Activated naive CD4-positive, alpha-beta T cell treated with anti-CD3 and anti-CD28 coated beads for 36 hours (primary cell): ENCODE measurements at regions of chr18 and their contacts with region 1.

Region 1: GRCh38 chr18:23452728-23453679 is at the start of gene RIOK3:
- DNase-seq: peak; percentile 94
- H3K4me3 Mint-ChIP-seq: peak within 1 kb of the TSS; percentile 99
- H3K27ac Mint-ChIP-seq: peak within 1 kb of the TSS; percentile 91
- H3K4me1 Mint-ChIP-seq: peaks cover 42% of the 10 kb centered on the region
- H3K27me3 Mint-ChIP-seq: no peaks in the 10 kb centered on the region
- total RNA-seq, gene RIOK3: 53.8 to 59.5 TPM

Region 2: GRCh38 chr18:21612125-21612991 is 1840.6 kb before region 1 on chr18 and contains the start of gene SNRPD1:
- CTCF ChIA-PET with region 1: no interaction called
- intact Hi-C with region 1: loop called (anchors 5 kb)
- DNase-seq: peak; percentile 89
- H3K4me3 Mint-ChIP-seq: peak within 1 kb of the TSS; percentile 96
- H3K27ac Mint-ChIP-seq: peak within 1 kb of the TSS; percentile 97
- H3K4me1 Mint-ChIP-seq: peaks cover 35% of the 10 kb centered on the region
- H3K27me3 Mint-ChIP-seq: no peaks in the 10 kb centered on the region
- total RNA-seq, gene SNRPD1: 133 to 144 TPM

Region 3: GRCh38 chr18:23437357-23438045 is 15.5 kb before region 1 on chr18:
- CTCF ChIA-PET with region 1: interaction called, 3 read pairs
- intact Hi-C with region 1: loop called (anchors 1 kb)
- DNase-seq: peak; percentile 84
- H3K4me3 Mint-ChIP-seq: peak overlapping the region; percentile 89
- H3K27ac Mint-ChIP-seq: no peak overlapping the region
- H3K4me1 Mint-ChIP-seq: peaks cover 21% of the 10 kb centered on the region
- H3K27me3 Mint-ChIP-seq: no peaks in the 10 kb centered on the region

Region 4: GRCh38 chr18:23487738-23488570 is 35.0 kb after region 1 on chr18:
- CTCF ChIA-PET with region 1: no interaction called
- intact Hi-C with region 1: loop called (anchors 1 kb)
- DNase-seq: peak; percentile 84
- H3K4me3 Mint-ChIP-seq: peak overlapping the region; percentile 57
- H3K27ac Mint-ChIP-seq: peak overlapping the region; percentile 86
- H3K4me1 Mint-ChIP-seq: peaks cover 19% of the 10 kb centered on the region
- H3K27me3 Mint-ChIP-seq: no peaks in the 10 kb centered on the region

Region 5: DNA sequence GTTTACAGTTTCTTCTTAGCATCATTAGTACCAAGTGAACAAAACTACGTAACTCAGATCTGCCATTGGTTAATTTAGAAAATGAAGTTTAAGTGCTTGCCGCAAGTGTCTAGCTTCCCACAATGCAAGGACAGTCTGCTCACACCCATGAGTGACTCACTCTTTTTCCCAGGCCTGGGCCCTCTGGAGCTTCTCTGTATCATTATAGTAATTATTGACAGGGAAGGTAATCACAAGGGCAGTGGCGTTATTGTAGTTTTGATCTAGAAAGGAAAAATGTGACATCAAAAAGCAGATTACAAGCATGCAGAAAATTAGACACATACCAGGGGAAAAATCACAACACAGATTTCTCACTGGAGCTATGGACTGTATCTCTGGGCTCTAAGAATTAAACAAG is 94.8 kb after region 1 on chr18:
- CTCF ChIA-PET with region 1: no interaction called
- intact Hi-C with region 1: no loop called
- DNase-seq: no peak
- H3K4me3 Mint-ChIP-seq: no peak overlapping the region
- H3K27ac Mint-ChIP-seq: no peak overlapping the region
- H3K4me1 Mint-ChIP-seq: no peaks in the 10 kb centered on the region
- H3K27me3 Mint-ChIP-seq: no peaks in the 10 kb centered on the region